RWPE1 (cell line): ENCODE measurements at regions of chr20 and their contacts with region 1.

Region 1: GRCh38 chr20:31496761-31497295 is 17.4 kb upstream of the HM13 start:
- DNase-seq: no peak
- H3K27ac ChIP-seq: no peak overlapping the region
- CTCF ChIP-seq: no peak

Region 2: GRCh38 chr20:31414380-31414779 is 82.4 kb before region 1 on chr20:
- CTCF ChIA-PET with region 1: interaction called, 17 read pairs
- POLR2A ChIA-PET with region 1: no interaction called
- DNase-seq: no peak
- H3K27ac ChIP-seq: no peak overlapping the region
- CTCF ChIP-seq: no peak

Region 3: DNA sequence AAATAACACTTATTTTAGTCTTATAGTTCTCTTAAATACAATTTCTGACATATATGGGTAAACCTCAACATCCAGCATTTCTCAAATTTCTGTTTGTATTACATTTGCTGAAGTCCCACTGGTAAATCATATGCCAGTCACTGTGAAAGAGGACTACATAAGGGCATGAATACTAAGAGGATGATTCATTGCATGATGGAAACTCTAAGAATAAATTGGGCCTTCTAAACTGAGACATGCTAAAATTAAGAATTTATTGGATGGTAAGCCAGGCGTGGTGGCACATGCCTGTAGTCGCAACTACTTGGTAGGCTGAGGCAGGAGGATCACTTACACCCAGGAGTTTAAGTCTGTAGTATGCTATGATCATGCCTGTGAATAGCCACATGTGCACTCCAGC is 44.3 kb before region 1 on chr20:
- CTCF ChIA-PET with region 1: interaction called, 44 read pairs
- POLR2A ChIA-PET with region 1: no interaction called
- DNase-seq: no peak
- H3K27ac ChIP-seq: no peak overlapping the region
- CTCF ChIP-seq: no peak

Region 4: DNA sequence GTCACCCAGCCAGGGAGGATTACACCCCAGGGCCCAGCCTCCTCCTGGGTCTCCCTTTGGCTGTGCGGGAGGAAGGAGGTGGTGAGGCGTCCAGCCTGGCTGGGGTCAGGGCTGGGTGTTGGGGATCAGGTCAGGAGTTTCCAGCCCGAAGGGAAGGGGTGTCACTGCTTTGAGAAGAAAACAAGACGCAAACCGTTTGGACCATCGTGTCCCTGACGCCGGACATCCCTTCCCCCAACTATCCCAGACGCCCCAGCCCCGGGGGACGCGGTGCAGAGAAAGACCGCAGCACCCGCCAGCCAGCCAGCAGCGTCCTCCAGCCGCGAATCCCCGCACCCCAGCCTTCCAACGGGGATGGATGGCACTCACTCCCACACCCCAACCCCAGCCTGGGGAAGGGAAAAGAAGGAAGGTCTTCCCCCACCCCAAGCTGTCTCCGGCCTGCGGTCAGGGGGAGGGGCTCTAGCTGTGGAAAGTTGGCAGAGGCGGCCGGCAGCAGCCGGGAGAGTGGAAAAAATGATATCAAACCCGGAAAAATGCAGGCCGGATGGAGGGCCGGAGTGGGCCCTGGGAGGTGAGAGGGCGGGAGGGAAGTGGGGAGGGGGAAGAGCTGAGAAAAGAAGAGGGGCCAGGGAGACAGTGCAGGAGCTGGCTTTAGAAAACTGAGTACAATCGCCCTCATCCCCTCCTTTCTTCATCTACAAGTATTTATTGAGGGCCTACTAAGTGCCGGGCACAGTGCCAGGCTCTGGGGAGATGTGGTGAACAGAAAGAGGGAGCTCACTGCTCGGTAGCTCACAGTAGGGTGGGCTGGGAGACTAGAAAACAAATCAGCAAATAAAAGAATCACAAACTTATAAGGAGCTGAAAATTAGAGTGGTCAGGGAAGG is 11.1 kb before region 1 on chr20:
- CTCF ChIA-PET with region 1: interaction called, 22 read pairs
- POLR2A ChIA-PET with region 1: no interaction called
- DNase-seq: no peak
- H3K27ac ChIP-seq: no peak overlapping the region
- CTCF ChIP-seq: no peak

Region 5: GRCh38 chr20:31514159-31515071 is 17.6 kb after region 1 on chr20 and contains the start of gene HM13:
- CTCF ChIA-PET with region 1: interaction called, 23 read pairs
- POLR2A ChIA-PET with region 1: no interaction called
- DNase-seq: peak; percentile 99
- H3K27ac ChIP-seq: peak within 1 kb of the TSS; percentile 75
- CTCF ChIP-seq: peak; percentile 100

Region 6: GRCh38 chr20:31527266-31527665 is 30.4 kb after region 1 on chr20:
- CTCF ChIA-PET with region 1: no interaction called
- POLR2A ChIA-PET with region 1: no interaction called
- DNase-seq: no peak
- H3K27ac ChIP-seq: no peak overlapping the region
- CTCF ChIP-seq: no peak

Region 7: DNA sequence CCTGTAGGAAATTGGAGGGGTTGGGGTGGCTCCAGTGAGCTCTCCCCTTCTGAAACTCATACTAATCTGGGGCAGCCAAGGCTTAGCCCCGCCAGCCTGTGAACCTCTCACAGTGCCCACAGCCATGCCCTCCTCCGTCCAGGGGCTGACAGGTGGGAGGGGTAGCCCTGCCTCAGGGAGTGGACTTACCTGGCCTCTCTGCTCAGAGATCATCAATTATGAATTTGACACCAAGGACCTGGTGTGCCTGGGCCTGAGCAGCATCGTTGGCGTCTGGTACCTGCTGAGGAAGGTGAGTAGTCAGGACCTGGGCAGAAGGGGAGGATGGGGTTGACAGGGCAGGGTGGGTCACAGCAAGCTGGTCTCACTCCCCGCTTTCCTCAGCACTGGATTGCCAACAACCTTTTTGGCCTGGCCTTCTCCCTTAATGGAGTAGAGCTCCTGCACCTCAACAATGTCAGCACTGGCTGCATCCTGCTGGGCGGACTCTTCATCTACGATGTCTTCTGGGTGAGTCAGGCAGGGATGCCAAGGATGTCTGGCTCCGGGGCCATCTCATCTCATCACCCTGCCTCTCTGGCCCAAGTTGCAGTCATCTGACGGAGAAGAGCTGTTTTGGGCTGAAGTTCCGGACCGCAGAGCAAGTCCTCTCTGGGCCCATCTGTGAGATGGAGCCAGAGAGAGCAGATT is 52.1 kb after region 1 on chr20:
- CTCF ChIA-PET with region 1: no interaction called
- POLR2A ChIA-PET with region 1: no interaction called
- DNase-seq: no peak
- H3K27ac ChIP-seq: peak overlapping the region; percentile 22
- CTCF ChIP-seq: no peak

Region 8: DNA sequence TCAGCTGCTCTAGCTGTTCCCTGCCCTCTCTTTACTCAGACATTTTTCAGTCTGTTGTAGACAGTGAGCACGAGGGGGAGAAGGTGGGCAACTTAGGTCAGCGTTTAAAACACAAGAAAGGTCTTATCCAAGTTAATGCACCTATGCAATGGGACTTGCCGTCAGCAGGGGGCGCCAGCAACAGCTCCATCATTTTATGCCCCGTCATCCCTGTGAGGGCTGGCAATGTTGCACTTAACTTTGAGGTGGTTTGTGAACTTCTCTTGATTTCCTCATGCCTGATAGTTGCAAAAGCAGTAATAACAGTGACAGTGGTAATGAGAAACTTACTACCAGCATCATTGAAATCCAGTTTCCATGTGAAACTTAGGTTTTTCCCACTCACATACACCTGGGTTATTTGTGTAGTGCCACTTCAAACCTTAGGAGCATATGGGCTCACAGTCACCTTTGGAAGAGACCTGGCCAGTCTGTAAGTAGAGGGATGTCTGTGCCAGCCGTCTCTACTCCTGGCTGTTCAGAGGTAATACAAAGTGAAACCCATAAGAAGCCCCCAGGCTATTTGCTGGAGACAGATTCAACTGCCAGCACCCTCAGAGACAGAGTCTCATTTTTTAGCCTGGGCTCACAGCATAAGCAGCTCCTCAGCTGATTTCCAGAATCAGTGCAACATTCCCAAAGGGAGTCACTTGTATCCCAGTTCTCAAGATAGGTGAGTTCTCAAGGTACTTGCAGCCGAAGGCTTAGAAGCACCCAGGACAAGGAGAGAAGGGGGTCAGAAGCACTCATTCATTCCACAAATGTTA is 63.5 kb after region 1 on chr20:
- CTCF ChIA-PET with region 1: no interaction called
- POLR2A ChIA-PET with region 1: no interaction called
- DNase-seq: peak; percentile 76
- H3K27ac ChIP-seq: peak overlapping the region; percentile 93
- CTCF ChIP-seq: peak; percentile 99

Region 9: DNA sequence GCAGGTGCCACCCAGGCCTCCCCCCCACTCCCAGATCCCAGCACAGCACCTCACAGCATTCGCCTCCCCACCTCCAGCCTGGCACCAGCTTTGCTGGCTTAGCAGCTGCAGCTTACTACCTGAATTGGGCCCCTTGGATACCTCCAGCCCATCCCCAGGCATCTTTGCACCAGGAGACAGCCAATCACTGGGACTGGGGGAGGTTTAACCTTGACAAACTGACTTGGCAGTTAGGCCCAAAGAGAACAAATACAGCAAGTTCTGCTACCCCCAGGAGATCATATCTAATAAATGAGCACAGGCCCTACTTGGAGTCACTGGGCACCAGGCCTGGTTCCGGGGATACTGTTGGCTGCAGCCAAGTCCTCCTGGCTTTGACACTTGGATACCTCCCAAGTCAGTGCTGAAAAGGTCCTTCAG is 446.2 kb after region 1 on chr20:
- CTCF ChIA-PET with region 1: no interaction called
- POLR2A ChIA-PET with region 1: no interaction called
- DNase-seq: no peak
- H3K27ac ChIP-seq: no peak overlapping the region
- CTCF ChIP-seq: no peak